Right ventricle myocardium inferior (tissue), 1 donor: ENCODE measurements at regions of chr17 and their contacts with region 1.

Region 1: DNA sequence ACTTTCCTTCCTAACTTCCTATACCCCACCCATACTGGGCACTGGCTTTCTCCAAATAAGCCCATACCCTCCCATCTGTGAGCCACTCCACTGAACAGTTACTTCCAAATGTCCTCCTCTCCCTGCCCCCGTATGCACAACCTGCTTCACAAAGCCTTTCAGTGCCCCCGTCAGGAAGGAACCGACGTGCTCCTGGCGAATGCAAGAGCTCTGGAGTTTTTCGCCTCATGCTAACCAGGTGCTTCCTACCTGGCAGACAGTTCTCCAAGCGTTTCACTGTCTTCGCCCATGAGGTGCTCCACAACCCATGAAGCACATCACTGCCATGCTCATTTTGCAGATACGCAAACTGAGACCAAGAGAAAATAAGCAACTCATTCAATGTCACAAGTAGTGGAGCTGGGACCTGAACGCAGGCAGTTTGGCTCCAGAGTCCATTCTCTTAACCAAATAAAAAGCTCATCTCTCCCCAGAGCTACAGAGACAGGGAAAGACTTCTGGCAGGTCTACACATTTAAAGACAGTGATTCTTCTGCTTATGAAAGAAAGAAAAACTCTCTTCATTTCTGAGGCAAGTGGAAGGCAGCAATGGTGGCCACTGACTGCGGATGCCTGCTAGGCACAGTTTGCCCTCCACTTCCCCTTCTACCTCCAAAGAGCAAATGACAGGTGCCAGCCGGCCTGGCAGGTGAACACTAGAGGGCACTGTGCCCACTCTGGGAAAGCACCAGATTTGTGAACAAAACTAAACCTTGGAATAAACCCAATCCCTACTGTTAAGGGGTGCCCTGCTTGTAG is 23.8 kb downstream of the SPHK1 start:
- DNase-seq: no peak
- ATAC-seq: no peak

Region 2: GRCh38 chr17:76337413-76337777 is 70.9 kb before region 1 on chr17:
- intact Hi-C with region 1: no loop called
- DNase-seq: no peak
- ATAC-seq: no peak

Region 3: DNA sequence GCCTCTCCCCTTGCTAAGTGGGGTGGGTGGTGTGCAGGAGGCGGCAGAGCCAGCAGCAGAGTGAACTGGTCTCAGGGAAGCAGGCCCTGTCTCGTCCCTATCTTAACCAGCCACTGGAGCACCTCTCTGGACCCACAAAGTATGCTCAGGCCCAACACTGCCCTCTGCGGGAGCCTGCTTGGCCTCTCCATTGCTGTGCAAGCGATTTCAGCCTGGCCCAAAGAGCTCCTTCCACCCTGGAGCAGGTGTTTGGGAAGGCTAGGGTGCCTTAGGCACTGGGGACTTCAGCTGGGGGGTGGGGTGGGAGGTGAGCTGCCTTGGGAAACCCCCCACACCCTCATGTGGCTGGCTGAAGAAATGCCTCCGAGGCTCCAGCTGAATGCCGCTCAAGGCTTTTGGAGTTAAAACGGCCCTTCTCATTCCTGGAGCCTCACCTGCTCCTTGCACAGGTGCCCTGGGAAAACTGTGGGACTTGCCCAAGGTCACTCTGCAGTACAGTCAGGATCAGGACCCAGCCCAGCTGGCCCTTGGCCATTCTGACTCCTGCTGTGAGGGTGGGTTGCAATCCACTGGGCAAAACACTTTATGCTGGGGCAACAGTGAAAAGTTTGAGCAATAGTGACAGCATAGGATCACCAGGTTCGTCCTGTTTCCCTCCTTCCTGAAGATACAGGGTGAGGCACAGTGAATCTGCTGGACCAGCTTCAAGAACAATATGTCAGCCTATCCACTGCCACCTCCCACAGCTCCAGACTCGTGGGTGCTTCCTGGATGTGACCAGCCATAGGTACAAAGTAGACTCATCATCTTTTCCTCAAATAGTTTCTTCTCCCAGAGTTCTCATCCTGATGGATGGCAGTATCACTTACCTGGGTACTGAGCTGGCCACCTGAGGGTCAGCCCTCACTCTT is 50.6 kb after region 1 on chr17:
- intact Hi-C with region 1: loop called (anchors 2 kb)
- DNase-seq: peak; percentile 65
- ATAC-seq: peak; percentile 80

Region 4: DNA sequence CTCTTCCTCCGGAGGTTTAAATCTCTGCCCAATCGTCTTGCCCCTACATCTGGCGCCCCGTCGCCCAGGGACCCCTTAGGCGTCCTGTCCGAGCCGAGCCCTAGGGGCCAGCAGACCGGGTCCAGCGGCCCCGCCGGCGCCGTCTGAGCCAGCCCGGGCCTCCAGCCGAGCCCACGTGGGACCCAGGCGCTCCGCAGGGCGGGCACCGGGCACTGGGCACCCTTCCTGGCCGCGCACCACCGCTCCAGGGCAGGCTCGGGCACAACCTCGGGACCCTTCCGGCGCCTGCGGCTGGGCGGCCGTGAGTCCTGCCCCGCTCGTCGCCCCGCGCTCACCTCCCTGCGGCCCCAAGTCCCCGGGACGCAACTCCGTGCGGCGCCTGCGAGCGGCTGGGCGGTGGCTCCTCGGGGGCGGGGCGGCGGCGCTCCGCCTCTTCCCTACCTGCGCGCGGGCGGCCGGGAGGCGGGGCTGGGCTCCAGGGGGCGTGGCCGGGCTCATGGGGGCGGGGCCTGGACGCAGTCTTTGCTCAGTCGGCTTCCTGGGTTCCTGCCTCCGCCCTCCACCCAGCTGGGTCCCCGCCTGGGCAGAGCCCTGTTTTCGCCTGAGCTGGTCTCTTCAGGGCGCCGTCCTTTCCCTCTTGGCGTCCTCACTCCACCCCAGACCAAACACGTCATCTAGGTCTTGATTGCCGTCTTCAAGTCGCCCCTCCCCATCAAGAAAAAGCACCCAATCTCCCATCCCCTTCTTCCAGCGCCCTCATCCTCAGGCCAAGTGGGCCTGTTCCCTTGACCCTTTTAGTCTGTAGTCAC is 93.0 kb after region 1 on chr17 and contains the start of gene RHBDF2:
- intact Hi-C with region 1: loop called (anchors 5 kb)
- DNase-seq: peak; percentile 97
- ATAC-seq: peak; percentile 88
- total RNA-seq, gene RHBDF2: 17.9 TPM

Region 5: GRCh38 chr17:76643553-76644148 is 235.4 kb after region 1 on chr17 and contains the start of gene ST6GALNAC1:
- intact Hi-C with region 1: no loop called
- DNase-seq: no peak
- ATAC-seq: no peak
- total RNA-seq, gene ST6GALNAC1: 6.1 TPM